ENCODE measurements at regions of chr16 and their contacts with region 1.

Region 1: DNA sequence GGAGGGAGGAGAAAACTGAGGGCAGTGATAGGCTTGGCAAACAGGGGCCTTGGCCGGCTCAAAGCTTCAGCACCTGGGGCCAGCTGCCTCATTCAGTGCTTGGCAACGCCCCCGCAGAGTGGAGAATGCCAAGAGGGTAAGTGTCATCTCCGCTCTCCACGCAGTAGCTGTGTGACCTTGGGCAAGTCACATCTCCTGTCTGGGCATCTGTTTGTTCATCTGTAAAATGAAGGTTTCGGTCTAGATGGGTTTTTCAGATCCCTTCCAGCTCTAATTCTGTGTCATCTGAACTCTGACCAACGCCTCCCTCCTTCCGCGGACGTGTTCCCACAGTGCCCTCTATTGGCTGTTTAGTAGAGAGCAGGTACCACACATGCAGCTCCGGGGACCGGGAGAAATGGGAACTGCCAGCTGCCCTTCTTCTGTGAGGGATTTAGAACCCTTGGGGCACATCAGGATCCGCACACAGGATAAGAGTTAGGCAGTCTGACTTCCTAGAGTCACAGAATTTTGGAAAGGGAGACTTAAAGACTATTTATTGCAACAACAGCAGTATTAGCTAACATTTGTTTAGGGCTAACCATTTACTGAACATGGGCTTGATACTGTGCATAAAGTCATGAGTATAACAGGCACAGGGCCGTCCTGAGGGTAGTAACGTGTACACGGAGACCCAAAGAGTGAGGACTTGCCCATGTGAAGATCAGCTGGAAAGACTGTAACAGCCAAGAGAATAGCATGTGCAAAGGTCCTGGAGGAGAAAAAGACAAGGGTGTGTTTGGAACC is 26.8 kb downstream of the GP2 start:
- DNase-seq: peak; percentile 62 to 63
- ATAC-seq: peak; percentile 91 to 96
- H3K4me3 ChIP-seq: no peak overlapping the region
- H3K27ac ChIP-seq: no peak overlapping the region
- H3K4me1 ChIP-seq: no peaks in the 10 kb centered on the region
- CTCF ChIP-seq: peak; percentile 73
- EP300 ChIP-seq: no peak
- POLR2A ChIP-seq: no peak
- RAD21 ChIP-seq: peak; percentile 85 to 92

Region 2: DNA sequence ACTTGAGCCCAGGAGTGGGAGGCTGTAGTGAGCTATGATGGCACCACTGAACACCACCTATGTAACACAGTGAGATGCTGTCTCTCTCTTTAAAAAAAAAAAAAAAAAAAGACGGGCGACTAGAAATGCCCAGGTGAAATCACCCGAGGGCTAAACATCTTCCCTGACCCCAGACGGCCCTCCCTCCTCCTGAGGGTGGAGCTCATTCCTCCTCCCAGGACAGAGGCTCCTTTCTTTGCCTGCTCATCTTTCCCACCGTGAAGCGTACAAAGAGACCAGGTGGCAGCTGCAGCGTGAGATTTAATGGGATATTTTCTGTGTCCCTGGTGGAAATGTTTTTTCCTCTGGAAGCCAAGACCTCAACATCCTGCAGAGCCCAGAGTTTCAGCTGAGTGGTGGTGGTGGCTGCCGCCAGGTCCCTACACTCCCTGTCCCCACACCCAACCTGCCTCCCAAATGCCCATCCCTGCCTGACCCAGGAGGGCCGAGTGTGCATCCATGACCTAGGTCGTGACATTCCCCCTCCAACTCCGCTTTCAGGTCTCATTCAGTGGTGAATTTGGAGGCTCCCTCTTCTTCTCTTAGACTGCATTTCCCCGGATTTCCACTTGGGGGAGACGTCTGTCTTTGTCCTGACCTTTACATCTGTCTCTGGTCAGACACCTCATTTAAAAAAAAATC is 401.4 kb before region 1 on chr16:
- CTCF ChIA-PET with region 1: interaction called, 55 read pairs
- POLR2A ChIA-PET with region 1: no interaction called
- DNase-seq: peak; percentile 66 to 68
- ATAC-seq: peak; percentile 87 to 90; a peak in 5 of 6 replicates
- H3K4me3 ChIP-seq: no peak overlapping the region
- H3K27ac ChIP-seq: no peak overlapping the region
- H3K4me1 ChIP-seq: 0 out of 3 replicates have a peak, but pooled peaks cover 4% of the 10 kb centered on the region
- CTCF ChIP-seq: peak; percentile 69
- EP300 ChIP-seq: no peak
- POLR2A ChIP-seq: no peak
- RAD21 ChIP-seq: peak; percentile 78 to 84

Region 3: DNA sequence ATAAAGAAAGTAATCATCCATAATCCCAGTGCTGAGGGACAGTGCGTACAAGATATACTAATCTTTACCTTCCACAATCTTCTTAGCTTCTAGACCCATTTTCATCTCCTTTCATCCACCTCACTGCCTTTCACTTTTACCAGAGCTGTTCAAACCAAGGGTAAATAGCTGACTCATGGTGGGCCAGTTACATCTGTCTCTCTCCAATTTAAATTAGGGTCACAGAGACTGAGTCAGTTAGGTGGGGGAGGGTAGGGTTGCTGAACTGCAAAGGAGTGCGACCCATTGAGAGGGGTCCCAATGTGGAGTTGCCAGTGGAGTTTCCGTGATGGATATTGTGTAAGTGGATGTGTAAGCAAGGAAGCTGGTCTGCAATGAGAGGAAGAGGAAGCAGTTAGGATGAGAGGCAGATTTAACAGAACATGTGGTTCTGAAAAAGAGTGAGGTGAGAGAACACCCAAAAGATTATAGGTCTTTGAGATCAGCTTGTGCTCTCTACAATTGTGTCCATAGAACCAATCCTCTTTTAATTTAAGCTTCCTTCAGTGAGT is 56.7 kb before region 1 on chr16:
- CTCF ChIA-PET with region 1: interaction called, 12 read pairs
- POLR2A ChIA-PET with region 1: no interaction called
- DNase-seq: no peak
- ATAC-seq: no peak
- H3K4me3 ChIP-seq: no peak overlapping the region
- H3K27ac ChIP-seq: no peak overlapping the region
- H3K4me1 ChIP-seq: no peaks in the 10 kb centered on the region
- CTCF ChIP-seq: no peak
- EP300 ChIP-seq: no peak
- POLR2A ChIP-seq: no peak
- RAD21 ChIP-seq: no peak

Region 4: DNA sequence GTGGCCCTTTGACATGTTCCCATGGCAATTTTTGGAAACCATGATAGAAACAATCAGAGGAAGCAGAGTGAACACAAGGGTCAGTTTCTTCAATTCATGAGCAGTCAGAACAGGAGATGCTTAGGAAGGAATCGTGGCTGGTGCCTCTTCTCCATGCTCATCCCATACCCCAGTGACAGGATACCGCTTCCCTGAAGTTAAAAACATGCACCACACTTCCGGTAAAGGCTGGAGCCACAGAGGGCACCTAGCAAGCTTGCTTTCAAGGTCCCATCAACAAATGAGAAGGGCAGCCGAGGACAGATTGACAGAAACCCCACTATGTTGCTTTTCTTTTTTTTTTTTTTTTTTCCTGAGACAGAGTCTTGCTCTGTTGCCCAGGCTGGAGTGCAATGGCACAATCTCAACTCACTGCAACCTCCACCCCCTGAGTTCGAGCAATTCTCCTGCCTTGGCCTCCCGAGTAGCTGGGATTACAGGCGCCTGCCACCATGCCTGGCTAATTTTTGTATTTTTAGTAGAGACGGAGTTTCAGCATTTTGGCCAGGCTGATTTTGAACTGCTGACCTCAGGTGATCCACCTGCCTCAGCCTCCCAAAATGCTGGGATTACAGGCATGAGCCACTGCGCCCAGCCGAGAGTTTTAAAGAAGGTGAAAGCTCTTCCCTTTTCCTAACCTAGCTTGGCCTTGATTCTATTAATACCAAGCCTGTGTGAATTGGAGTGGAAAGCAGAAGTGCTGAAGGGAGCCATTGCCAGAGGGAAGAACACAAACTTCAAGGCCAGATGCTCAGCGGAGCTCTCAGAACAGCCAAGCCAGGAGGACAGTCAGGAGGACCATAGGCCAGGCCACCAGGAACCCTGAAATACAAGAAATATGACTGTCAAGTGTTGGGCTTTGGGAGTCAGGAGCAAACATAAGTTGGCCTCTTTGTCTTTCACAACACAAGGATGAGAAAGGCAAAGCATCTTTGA is 10.2 kb after region 1 on chr16:
- CTCF ChIA-PET with region 1: interaction called, 33 read pairs
- POLR2A ChIA-PET with region 1: no interaction called
- DNase-seq: no peak
- ATAC-seq: no peak
- H3K4me3 ChIP-seq: no peak overlapping the region
- H3K27ac ChIP-seq: no peak overlapping the region
- H3K4me1 ChIP-seq: no peaks in the 10 kb centered on the region
- CTCF ChIP-seq: no peak
- EP300 ChIP-seq: no peak
- POLR2A ChIP-seq: no peak
- RAD21 ChIP-seq: no peak

Region 5: GRCh38 chr16:20323677-20324076 is 23.2 kb after region 1 on chr16:
- CTCF ChIA-PET with region 1: no interaction called
- POLR2A ChIA-PET with region 1: no interaction called
- DNase-seq: no peak
- ATAC-seq: no peak
- H3K4me3 ChIP-seq: no peak overlapping the region
- H3K27ac ChIP-seq: no peak overlapping the region
- H3K4me1 ChIP-seq: no peaks in the 10 kb centered on the region
- CTCF ChIP-seq: no peak
- EP300 ChIP-seq: no peak
- POLR2A ChIP-seq: no peak
- RAD21 ChIP-seq: no peak

Region 6: GRCh38 chr16:20410121-20410723 is 109.7 kb after region 1 on chr16:
- CTCF ChIA-PET with region 1: no interaction called
- POLR2A ChIA-PET with region 1: no interaction called
- DNase-seq: no peak
- ATAC-seq: no peak
- H3K4me3 ChIP-seq: no peak overlapping the region
- H3K27ac ChIP-seq: no peak overlapping the region
- H3K4me1 ChIP-seq: no peaks in the 10 kb centered on the region
- CTCF ChIP-seq: no peak
- EP300 ChIP-seq: no peak
- POLR2A ChIP-seq: no peak
- RAD21 ChIP-seq: no peak

Region 7: GRCh38 chr16:20424129-20424866 is 123.8 kb after region 1 on chr16:
- CTCF ChIA-PET with region 1: no interaction called
- POLR2A ChIA-PET with region 1: no interaction called
- DNase-seq: no peak
- ATAC-seq: no peak
- H3K4me3 ChIP-seq: no peak overlapping the region
- H3K27ac ChIP-seq: no peak overlapping the region
- H3K4me1 ChIP-seq: no peaks in the 10 kb centered on the region
- CTCF ChIP-seq: no peak
- EP300 ChIP-seq: no peak
- POLR2A ChIP-seq: no peak
- RAD21 ChIP-seq: no peak

Region 8: DNA sequence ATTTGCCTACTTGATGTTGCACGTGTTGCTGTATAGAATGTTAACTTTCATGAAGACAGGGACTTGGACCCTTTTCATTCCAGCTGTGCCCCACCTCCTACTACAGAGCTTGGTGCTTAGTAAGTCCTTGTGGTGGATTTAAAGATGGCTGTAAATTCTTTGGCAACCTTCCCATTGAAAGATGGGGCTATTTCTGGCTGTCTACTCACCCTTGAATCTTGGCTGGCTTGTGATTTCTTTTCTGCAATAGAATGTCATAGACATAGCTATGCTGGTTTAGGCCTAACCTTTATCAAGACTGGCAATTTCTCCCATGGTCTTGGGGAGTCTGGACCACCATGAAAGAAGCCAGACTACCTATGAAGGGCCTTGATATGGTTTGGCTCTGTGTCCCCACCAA is 209.8 kb after region 1 on chr16:
- CTCF ChIA-PET with region 1: no interaction called
- POLR2A ChIA-PET with region 1: no interaction called
- DNase-seq: no peak
- ATAC-seq: no peak
- H3K4me3 ChIP-seq: no peak overlapping the region
- H3K27ac ChIP-seq: no peak overlapping the region
- H3K4me1 ChIP-seq: no peaks in the 10 kb centered on the region
- CTCF ChIP-seq: no peak
- EP300 ChIP-seq: no peak
- POLR2A ChIP-seq: no peak
- RAD21 ChIP-seq: no peak